PC-9 (cell line): ENCODE measurements at regions of chr22 and their contacts with region 1.

Region 1: DNA sequence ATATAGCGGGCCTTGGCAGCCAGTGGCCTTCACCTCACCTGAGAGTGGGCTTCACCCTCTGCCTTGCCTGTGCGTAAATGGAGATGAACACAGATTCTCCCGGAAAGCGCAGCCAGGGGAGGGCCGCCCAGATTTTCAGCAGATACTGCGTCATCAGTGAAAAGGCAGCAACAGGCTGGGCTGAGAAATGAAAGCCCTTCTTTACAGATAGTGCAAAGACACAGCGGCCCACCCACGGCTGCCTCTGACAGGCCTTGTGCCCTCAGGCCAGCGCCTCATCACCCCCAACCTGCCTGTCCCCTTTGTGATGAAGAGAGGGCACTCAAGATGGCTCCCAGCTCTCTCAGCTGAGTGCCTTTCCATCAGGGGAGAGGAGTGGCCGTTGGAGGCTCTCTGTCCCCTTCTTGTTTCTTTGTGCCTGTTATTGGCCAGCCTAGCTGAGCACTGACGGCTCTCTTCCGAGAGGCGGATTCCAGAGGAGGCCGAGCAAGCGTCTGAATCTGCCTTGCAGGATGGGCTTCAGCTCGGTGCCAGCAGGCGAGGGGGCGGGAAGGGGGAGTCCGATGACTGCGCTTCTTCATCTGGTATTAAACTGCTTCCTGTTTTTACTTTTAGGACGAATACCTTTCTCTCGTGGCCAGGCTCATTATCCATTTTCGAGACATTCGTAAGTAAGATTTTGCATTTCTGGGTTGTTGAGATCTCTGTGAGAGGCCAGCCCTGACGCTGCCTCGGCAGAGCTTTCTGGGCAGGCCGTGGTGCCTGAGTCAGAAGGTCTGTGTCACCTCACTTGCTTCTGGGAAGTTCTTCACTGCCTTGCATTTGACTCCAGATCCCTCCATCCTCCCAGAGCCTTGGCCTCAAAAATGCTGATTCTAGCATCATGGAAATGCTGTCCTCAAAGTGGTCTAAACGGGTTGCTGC is 43.7 kb downstream of the MED15 start:
- DNase-seq: no peak
- H3K4me3 ChIP-seq: no peak overlapping the region
- H3K27ac ChIP-seq: no peak overlapping the region
- H3K4me1 ChIP-seq: no peaks in the 10 kb centered on the region
- H3K27me3 ChIP-seq: no peaks in the 10 kb centered on the region
- CTCF ChIP-seq: no peak

Region 2: DNA sequence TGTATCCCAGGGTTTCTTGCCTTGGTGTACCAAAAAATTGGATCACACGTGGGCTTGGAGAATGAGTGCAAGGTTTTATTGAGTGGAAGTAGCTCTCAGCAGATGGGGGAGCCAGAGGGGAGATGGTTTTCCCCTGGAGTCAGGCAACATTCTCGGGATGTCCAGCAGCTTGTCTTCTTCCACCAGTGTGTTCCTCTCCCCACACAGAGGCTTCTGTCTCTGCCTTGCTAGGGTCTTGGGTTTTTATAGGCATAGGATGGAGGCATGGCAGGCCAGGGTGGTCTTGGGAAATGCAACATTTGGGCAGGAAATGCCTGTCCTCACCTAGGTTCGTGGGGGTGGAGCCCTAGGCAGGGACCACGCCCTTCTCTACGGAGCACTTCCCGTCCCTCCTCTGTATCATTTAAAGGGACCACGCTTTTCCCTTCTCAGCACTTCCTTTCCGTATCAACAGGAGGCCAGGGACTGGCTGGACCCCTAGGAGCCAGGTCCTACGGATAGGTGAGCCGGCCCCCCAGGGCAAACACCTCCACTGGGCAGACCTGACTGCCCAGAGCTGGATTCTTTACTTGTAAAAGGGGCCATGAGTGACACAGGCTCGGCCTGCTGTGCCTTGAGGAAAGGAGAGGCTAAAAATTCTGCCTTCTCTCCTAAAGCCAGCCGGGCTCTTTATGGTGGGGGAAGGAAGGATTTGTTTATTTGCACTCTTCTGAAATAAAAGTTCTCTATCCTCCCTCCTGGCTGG is 344.9 kb before region 1 on chr22:
- CTCF ChIA-PET with region 1: no interaction called
- POLR2A ChIA-PET with region 1: no interaction called
- intact Hi-C with region 1: loop called (anchors 5 kb)
- DNase-seq: peak; percentile 49 to 54
- H3K4me3 ChIP-seq: peak overlapping the region; percentile 94
- H3K27ac ChIP-seq: peak overlapping the region; percentile 61
- H3K4me1 ChIP-seq: peaks cover 20% of the 10 kb centered on the region
- H3K27me3 ChIP-seq: no peaks in the 10 kb centered on the region
- CTCF ChIP-seq: no peak